SK-N-SH (cell line): ENCODE measurements at regions of chr7 and their contacts with region 1.

Region 1: DNA sequence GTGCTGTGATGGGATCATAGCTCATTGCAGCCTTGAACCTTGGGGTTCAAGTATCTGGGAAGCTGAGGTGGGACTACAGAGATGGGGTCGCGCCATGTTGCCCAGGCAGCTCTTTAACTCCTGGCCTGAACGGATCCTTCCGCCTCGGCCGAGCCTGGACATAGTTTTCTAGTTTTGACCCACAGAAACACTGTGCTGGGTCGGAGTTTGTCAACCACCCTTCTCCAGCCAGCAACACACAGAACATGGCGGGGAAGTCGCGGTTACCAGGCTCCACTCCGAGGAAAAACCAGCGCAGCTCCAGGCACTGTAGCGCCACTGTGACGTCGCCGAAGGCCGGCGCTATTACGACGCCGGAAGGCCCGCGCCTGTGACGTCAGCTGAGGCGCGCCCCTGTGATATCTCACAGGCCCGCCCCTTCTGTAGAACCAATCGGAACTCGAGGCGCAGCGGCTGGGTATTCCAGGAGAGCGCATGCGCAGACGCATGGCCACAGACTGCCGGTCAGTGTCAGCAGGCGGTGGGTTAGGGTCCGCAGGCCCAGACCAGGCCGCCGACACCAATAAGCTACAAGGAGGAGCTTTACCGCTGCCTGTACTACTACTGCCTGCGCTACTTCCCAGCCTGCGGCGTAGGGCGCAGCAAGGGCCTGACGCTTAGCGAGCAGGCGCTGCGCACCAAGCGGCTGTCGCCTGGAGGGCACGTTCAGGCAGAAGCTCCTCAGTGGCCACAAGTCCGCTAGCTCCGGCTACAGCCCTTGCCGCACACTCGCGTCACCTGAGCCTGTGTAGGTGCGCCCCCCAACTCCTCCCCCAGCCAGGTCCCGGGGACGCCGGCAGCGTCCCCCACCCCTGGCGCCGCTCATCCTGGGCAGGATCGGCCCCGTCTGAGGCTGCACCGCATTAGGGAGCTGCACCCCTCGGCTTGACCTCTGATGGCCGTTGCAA is 135.2 kb upstream of the KCTD7 start:
- DNase-seq: peak; percentile 99
- H3K4me3 ChIP-seq: peak overlapping the region; percentile 62 to 74
- H3K27ac ChIP-seq: peak overlapping the region; percentile 84
- H3K4me1 ChIP-seq: peaks cover 0 to 8% of the 10 kb centered on the region in 2 experiments; a peak in 1 of 4 replicates
- H3K27me3 ChIP-seq: no peaks in the 10 kb centered on the region
- CTCF ChIP-seq: peak; percentile 22; the same call in 1 of the 2 replicates
- EP300 ChIP-seq: no peak
- RAD21 ChIP-seq: peak; percentile 35; the same call in 1 of the 2 replicates

Region 2: GRCh38 chr7:66413379-66414114 is 80.0 kb before region 1 on chr7:
- CTCF ChIA-PET with region 1: no interaction called
- POLR2A ChIA-PET with region 1: interaction called, 15 read pairs
- DNase-seq: peak; percentile 100
- H3K4me3 ChIP-seq: peak overlapping the region; percentile 52 to 60
- H3K27ac ChIP-seq: no peak overlapping the region
- H3K4me1 ChIP-seq: peaks cover 4 to 9% of the 10 kb centered on the region in 2 experiments; a peak in 2 of 4 replicates
- H3K27me3 ChIP-seq: no peaks in the 10 kb centered on the region
- CTCF ChIP-seq: peak; percentile 63
- EP300 ChIP-seq: no peak
- RAD21 ChIP-seq: peak; percentile 53

Region 3: DNA sequence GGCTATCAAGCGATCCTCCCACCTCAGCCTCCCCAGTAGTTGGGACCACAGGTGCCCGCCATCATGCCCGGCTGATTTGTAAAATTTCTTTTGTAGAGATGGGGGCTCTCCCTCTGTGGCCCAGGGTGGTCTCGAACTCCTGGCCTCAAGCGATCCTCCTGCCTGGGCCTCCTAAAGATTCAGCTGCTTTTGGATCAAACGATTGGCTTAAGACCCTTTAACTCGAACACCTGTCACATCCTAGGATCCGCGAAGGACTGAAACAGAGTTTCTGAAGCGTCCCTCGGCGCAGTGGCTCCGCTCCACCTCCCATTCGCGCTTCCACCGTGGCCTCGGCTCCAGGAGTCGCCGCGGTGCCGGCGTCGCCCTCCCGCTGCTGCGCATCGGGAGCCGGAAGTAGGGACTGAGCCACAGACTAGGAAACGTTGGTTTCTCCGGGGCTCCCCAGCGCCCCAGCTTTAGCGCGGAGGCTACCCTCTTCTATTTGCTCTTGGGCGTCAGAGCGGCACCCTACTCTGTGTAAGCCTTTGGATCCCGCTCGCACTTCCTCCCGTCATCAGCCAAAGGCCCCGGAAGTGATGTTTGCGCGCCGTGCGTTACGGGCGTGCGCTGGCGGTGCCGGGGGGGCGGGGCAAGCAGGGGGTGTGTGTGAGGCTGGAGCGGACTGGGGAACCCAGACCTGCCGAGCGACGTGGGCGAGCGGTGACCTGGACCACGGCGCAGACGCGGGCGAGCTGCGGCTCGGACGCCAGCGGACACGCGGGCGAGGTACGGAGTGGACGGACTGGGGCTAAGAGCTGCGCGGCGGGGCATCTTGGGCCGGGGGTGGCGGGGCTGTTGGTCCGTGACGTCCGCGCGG is 188.2 kb after region 1 on chr7:
- CTCF ChIA-PET with region 1: no interaction called
- POLR2A ChIA-PET with region 1: no interaction called
- DNase-seq: peak; percentile 100
- H3K4me3 ChIP-seq: peak overlapping the region; percentile 67 to 94
- H3K27ac ChIP-seq: peak overlapping the region; percentile 80 to 93
- H3K4me1 ChIP-seq: peaks cover 0 to 5% of the 10 kb centered on the region in 2 experiments; a peak in 1 of 4 replicates
- H3K27me3 ChIP-seq: no peaks in the 10 kb centered on the region
- CTCF ChIP-seq: no peak
- EP300 ChIP-seq: peak in 1 of 2 experiments; percentile 42; a peak in 1 of 4 replicates
- RAD21 ChIP-seq: no peak; the same call in 1 of the 2 replicates